ENCODE measurements at regions of chr6 and their contacts with region 1.

Region 1: GRCh38 chr6:140846503-140847261 is 1286.0 kb upstream of the GJE1 start:
- DNase-seq: peak; percentile 64
- H3K4me3 ChIP-seq: no peak overlapping the region
- H3K27ac ChIP-seq: peak overlapping the region; percentile 78
- H3K4me1 ChIP-seq: peaks cover 47% of the 10 kb centered on the region
- H3K27me3 ChIP-seq: no peaks in the 10 kb centered on the region
- CTCF ChIP-seq: no peak
- POLR2A ChIP-seq: no peak

Region 2: GRCh38 chr6:140441256-140441655 is 405.4 kb before region 1 on chr6:
- CTCF ChIA-PET with region 1: no interaction called
- POLR2A ChIA-PET with region 1: no interaction called
- dilution Hi-C with region 1: no loop called
- intact Hi-C with region 1: loop called (anchors 10 kb)
- DNase-seq: peak; percentile 57
- H3K4me3 ChIP-seq: no peak overlapping the region
- H3K27ac ChIP-seq: no peak overlapping the region
- H3K4me1 ChIP-seq: peaks cover 18% of the 10 kb centered on the region
- H3K27me3 ChIP-seq: no peaks in the 10 kb centered on the region
- CTCF ChIP-seq: peak; percentile 27 to 40
- POLR2A ChIP-seq: no peak

Region 3: DNA sequence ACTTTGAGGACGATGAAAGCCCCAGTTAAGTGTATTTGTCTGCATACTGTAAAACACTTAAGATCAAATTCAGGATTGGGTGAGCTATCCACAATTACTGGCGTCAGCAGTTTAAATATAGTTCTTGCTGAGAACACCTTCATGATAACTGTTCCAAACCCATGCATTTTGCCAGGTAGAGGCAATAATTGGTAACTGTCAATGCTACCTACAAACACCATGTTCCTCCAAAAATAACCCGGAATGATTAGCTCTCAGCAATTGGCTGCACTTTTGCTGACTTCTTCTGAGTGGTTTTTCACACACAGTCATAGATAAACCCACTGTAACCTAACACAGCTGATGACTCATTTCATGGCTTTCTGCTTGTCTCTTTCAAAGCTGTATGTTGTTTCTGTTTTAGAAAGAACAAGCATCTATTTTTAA is 72.6 kb before region 1 on chr6:
- CTCF ChIA-PET with region 1: no interaction called
- POLR2A ChIA-PET with region 1: no interaction called
- dilution Hi-C with region 1: no loop called
- intact Hi-C with region 1: loop called (anchors 5 kb)
- DNase-seq: peak; percentile 82
- H3K4me3 ChIP-seq: no peak overlapping the region
- H3K27ac ChIP-seq: peak overlapping the region; percentile 20
- H3K4me1 ChIP-seq: peaks cover 18% of the 10 kb centered on the region
- H3K27me3 ChIP-seq: no peaks in the 10 kb centered on the region
- CTCF ChIP-seq: no peak
- POLR2A ChIP-seq: no peak

Region 4: DNA sequence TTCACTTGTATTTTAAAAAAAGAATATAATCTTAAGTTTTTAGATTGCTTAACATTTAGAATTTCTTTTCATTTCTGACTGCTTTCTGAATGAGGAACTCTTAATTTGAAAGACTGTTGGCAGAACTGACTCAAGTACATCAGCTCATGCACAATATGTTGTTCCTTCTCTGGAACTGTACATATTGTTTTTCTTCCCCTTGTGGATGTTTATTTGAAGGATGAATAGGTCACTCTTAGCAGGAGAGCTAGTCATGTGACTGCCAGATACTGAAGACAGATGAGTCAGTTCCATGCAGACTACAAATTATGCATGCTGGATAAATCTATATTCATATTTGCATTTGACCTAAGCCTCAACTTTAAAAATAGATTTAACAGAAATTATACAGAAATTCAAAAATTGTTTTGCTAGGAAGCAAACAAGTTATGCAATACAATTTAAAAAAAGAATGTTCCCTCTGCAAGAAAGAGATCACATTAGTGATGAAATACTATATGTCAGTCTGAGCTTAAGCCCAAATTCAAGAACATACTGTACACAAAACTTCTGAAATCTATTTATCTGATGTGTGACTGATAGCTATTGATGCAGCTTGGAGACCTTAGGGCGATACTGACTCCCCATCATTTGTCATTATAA is 11.2 kb after region 1 on chr6:
- CTCF ChIA-PET with region 1: interaction called, 5 read pairs
- POLR2A ChIA-PET with region 1: no interaction called
- dilution Hi-C with region 1: no loop called
- intact Hi-C with region 1: loop called (anchors 1 kb)
- DNase-seq: peak; percentile 89
- H3K4me3 ChIP-seq: no peak overlapping the region
- H3K27ac ChIP-seq: peak overlapping the region; percentile 74
- H3K4me1 ChIP-seq: peaks cover 26% of the 10 kb centered on the region
- H3K27me3 ChIP-seq: no peaks in the 10 kb centered on the region
- CTCF ChIP-seq: no peak
- POLR2A ChIP-seq: peak; percentile 41

Region 5: DNA sequence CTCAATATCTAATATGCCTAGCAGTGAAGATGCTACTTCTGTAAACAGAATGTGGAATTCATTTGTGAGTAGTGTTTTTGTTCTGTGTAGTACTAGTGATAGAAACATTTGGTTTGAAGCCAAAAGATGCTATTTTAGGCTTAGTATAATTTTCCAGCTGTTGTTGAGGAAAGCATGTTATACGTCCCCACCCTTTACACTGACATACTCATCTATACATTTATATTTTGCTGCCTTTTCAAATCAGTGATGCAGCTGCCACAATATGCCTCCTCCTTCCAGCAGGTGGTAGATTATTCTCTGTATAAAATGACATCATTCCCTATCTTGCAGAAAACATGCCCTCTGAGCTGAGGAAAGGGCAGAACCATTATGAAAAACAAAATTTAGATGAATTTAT is 68.4 kb after region 1 on chr6:
- CTCF ChIA-PET with region 1: no interaction called
- POLR2A ChIA-PET with region 1: no interaction called
- dilution Hi-C with region 1: no loop called
- intact Hi-C with region 1: loop called (anchors 1 kb)
- DNase-seq: no peak
- H3K4me3 ChIP-seq: no peak overlapping the region
- H3K27ac ChIP-seq: no peak overlapping the region
- H3K4me1 ChIP-seq: no peaks in the 10 kb centered on the region
- H3K27me3 ChIP-seq: no peaks in the 10 kb centered on the region
- CTCF ChIP-seq: no peak
- POLR2A ChIP-seq: no peak

Region 6: DNA sequence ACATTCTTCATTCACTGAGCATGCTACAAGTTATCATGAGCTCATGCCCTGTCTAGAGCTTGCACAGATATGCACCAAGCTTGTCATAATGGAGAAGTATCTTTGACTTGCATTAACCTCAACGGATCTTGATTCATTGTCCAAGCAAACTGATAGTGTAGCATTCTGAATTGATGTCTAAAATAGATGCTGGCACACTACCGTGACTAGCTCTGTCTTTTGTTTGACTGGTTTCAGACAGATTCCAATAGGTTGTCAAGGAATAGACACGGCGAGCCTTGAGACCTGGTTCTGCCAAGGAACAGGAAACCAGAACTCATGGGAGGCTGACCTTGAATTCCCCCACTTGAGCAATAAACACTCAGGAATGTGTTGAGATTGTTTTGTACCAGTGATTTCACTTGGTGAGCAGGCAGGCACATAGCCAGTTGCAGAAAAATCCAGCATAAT is 133.0 kb after region 1 on chr6:
- CTCF ChIA-PET with region 1: no interaction called
- POLR2A ChIA-PET with region 1: no interaction called
- dilution Hi-C with region 1: no loop called
- intact Hi-C with region 1: no loop called
- DNase-seq: peak; percentile 98
- H3K4me3 ChIP-seq: no peak overlapping the region
- H3K27ac ChIP-seq: peak overlapping the region; percentile 73
- H3K4me1 ChIP-seq: peaks cover 14% of the 10 kb centered on the region
- H3K27me3 ChIP-seq: no peaks in the 10 kb centered on the region
- CTCF ChIP-seq: no peak
- POLR2A ChIP-seq: no peak